ENCODE measurements at regions of chr4 and their contacts with region 1.

Region 1: GRCh38 chr4:68904786-68905185 is 46.8 kb downstream of the UGT2A3 start:
- DNase-seq: peak; percentile 41
- H3K4me3 Mint-ChIP-seq: peak overlapping the region; percentile 84
- H3K27ac Mint-ChIP-seq: peak overlapping the region; percentile 97
- H3K4me1 Mint-ChIP-seq: peaks cover 38% of the 10 kb centered on the region
- H3K27me3 Mint-ChIP-seq: no peaks in the 10 kb centered on the region
- CTCF ChIP-seq: peak; percentile 25

Region 2: DNA sequence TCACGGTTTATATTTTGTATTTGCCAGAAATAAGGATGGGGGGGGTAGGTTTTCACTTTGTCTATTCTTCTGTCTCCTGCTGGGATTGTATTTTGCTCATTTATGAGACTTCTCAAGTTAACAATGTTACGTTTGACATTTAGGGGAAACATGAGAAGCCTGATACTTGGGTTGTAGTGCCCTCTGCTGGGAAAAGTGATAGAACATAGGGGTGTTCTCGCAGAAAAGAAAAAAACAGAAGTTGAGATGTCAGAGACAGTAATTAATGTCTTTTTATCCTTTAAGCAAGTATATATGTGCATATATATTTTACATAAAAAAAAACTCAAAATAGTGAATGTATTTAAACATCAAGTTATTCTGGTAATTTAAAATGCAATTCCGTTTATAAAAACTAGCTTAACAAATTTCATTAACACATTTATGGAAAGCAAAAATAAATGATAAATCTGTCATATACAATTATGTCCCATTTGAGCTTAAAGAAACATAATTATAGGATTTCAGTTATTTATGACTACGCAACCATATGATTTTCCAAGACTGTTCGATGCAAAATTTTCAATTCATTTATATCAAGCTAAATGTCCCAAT is 729.1 kb before region 1 on chr4:
- CTCF ChIA-PET with region 1: no interaction called
- intact Hi-C with region 1: no loop called
- DNase-seq: peak; percentile 53
- H3K4me3 Mint-ChIP-seq: no peak overlapping the region
- H3K27ac Mint-ChIP-seq: no peak overlapping the region
- H3K4me1 Mint-ChIP-seq: peaks cover 8% of the 10 kb centered on the region
- H3K27me3 Mint-ChIP-seq: no peaks in the 10 kb centered on the region
- CTCF ChIP-seq: peak; percentile 35

Region 3: DNA sequence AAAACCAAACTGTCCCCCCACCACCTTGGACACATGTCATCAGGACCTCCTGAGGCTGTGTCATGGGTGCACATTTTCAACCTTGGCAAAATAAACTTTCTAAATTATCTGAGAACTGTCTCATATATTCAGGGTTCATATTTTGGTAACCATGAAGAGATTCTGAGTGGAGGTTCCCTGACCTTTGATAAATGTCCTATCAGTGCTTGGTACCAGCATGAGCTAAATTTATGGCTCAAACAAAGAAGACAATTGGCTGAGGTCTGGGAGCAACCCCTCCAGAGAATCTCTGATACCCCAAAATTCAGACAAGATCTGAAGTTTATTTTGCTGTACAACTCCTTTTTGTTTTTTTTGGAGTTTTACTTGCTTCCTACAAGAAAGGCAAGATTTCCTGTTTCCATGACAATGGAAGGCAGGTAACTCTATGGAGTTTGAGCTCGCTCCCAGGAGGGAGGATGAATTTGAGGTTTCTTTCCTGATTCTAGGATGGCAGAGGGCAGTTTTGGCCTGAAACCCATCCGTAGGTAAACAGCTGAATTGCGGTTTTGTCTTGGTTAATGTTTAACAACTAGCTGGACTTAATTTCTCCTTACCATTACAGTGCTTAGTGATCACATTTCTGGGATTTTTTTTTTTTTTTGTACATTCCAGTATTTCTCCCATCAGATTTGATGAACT is 248.9 kb before region 1 on chr4:
- CTCF ChIA-PET with region 1: no interaction called
- intact Hi-C with region 1: loop called (anchors 2 kb)
- DNase-seq: peak; percentile 34
- H3K4me3 Mint-ChIP-seq: peak overlapping the region; percentile 21
- H3K27ac Mint-ChIP-seq: peak overlapping the region; percentile 88
- H3K4me1 Mint-ChIP-seq: peaks cover 24% of the 10 kb centered on the region
- H3K27me3 Mint-ChIP-seq: no peaks in the 10 kb centered on the region
- CTCF ChIP-seq: no peak

Region 4: DNA sequence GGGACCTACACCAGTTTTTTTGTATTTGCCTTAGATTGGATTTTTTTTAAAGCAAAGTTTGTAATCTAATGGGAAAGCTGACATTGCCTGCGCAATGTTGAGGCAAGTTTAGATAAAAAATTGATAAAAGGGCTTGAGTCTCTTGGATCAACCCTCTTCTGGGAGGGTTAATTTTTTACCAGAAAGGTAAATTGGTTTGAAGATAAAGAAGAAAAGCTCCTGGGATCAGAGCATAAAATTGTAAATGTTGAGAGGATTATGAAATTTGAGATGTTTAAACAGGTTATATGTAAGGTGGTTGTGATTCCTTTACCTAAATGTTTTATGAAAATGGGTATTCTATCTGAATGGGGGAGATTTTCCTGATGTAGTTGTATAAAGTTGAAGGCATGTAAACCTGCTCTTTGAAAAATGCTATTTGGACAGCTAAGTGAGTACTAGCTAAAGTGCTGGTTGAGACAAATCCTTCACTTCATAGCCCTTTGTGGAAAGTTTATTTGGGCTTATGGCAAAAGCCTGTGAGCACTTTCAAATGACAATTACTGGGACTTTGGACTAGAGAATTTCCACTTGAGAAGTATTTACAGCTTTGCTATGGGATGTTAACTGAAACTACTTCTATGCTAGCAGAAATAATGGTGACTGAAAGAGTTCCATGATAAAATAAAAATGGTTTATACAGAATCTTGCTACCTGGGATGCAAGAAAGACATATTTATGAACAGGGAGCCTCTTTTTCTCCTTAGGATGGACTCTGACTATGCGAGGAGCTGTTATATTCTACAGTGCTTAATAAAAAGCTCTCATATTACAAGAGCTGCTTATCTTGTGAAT is 32.8 kb before region 1 on chr4:
- CTCF ChIA-PET with region 1: no interaction called
- intact Hi-C with region 1: loop called (anchors 5 kb)
- DNase-seq: no peak
- H3K4me3 Mint-ChIP-seq: no peak overlapping the region
- H3K27ac Mint-ChIP-seq: peak overlapping the region; percentile 31
- H3K4me1 Mint-ChIP-seq: peaks cover 16% of the 10 kb centered on the region
- H3K27me3 Mint-ChIP-seq: no peaks in the 10 kb centered on the region
- CTCF ChIP-seq: no peak

Region 5: GRCh38 chr4:69038582-69038981 is 133.8 kb after region 1 on chr4:
- CTCF ChIA-PET with region 1: no interaction called
- intact Hi-C with region 1: loop called (anchors 5 kb)
- DNase-seq: peak; percentile 55
- H3K4me3 Mint-ChIP-seq: peak overlapping the region; percentile 35
- H3K27ac Mint-ChIP-seq: peak overlapping the region; percentile 98
- H3K4me1 Mint-ChIP-seq: peaks cover 49% of the 10 kb centered on the region
- H3K27me3 Mint-ChIP-seq: no peaks in the 10 kb centered on the region
- CTCF ChIP-seq: no peak

Region 6: DNA sequence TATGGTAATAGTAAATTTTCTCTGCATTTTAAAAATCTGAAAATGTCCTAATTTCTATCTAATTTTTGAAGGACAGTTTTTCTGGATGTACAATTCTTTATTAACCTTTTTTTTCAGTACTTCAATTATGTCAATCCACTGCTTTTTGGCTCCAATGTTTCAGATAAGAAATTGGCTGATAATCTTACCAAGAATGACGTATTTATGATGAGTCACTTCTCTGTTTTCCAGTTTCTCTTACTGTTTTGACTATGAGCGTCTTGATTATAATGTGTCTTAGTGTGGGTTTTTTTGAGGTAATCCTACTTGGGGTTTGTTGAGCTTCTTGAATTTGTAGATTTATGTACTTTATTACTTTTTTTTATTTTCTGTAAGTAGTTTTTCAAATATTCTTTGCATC is 262.5 kb after region 1 on chr4:
- CTCF ChIA-PET with region 1: interaction called, 8 read pairs
- intact Hi-C with region 1: loop called (anchors 5 kb)
- DNase-seq: no peak
- H3K4me3 Mint-ChIP-seq: no peak overlapping the region
- H3K27ac Mint-ChIP-seq: peak overlapping the region; percentile 51
- H3K4me1 Mint-ChIP-seq: peaks cover 18% of the 10 kb centered on the region
- H3K27me3 Mint-ChIP-seq: no peaks in the 10 kb centered on the region
- CTCF ChIP-seq: no peak